ENCODE measurements at regions of chr16 and their contacts with region 1.

Region 1: GRCh38 chr16:19886073-19886941 is 1.7 kb upstream of the GPRC5B start:
- DNase-seq: peak; percentile 12
- H3K4me3 ChIP-seq: peak overlapping the region; percentile 29
- CTCF ChIP-seq: peak; percentile 100

Region 2: GRCh38 chr16:19583665-19584300 is 302.5 kb before region 1 on chr16:
- CTCF ChIA-PET with region 1: interaction called, 41 read pairs
- POLR2A ChIA-PET with region 1: no interaction called
- DNase-seq: no peak
- H3K4me3 ChIP-seq: no peak overlapping the region
- CTCF ChIP-seq: peak; percentile 82

Region 3: DNA sequence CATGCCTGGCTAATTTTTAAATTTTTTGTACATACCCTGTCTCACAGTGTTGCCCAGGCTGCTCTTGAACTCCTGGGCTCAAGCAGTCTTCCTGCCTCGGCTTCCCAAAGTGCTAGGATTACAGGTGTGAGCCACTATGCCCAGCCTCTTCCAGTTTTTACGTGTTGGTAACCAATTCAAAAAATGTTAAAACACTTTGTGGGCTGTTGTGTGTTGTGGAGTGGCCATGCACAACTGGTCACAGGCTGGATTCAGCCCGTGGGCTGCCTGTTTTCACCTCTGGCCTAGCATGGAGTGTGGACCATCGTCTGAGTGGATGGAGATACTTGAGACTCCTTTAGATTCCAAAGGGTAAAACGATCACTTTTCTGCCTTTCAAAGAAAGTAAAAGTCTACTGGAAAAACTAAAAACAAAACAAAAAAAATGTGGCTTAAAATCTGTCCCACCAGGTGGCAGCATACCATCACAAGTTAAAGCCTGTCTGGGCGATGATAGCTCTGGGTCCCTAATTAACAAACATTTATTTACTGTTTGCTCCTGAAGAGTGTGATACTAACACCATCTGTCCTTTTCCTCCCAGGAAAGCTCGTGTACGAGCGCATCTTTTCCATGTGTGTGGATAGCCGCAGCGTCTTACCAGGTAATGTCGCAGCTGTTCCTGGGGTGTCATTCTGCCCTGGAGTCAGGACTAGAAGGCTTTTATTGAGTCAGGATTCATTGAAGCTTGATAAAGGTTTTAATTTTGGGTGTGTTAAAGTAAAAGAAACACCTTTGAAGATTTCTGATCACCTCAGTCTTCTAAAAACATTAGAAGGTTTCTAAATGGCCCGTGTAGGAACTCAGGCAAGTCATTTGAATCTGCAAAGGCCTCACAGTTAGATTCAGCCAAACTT is 285.0 kb before region 1 on chr16:
- CTCF ChIA-PET with region 1: interaction called, 250 read pairs
- POLR2A ChIA-PET with region 1: no interaction called
- DNase-seq: no peak
- H3K4me3 ChIP-seq: no peak overlapping the region
- CTCF ChIP-seq: peak; percentile 37

Region 4: DNA sequence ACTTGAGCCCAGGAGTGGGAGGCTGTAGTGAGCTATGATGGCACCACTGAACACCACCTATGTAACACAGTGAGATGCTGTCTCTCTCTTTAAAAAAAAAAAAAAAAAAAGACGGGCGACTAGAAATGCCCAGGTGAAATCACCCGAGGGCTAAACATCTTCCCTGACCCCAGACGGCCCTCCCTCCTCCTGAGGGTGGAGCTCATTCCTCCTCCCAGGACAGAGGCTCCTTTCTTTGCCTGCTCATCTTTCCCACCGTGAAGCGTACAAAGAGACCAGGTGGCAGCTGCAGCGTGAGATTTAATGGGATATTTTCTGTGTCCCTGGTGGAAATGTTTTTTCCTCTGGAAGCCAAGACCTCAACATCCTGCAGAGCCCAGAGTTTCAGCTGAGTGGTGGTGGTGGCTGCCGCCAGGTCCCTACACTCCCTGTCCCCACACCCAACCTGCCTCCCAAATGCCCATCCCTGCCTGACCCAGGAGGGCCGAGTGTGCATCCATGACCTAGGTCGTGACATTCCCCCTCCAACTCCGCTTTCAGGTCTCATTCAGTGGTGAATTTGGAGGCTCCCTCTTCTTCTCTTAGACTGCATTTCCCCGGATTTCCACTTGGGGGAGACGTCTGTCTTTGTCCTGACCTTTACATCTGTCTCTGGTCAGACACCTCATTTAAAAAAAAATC is 12.8 kb after region 1 on chr16:
- CTCF ChIA-PET with region 1: interaction called, 15 read pairs
- POLR2A ChIA-PET with region 1: no interaction called
- DNase-seq: no peak
- H3K4me3 ChIP-seq: no peak overlapping the region
- CTCF ChIP-seq: peak; percentile 66

Region 5: DNA sequence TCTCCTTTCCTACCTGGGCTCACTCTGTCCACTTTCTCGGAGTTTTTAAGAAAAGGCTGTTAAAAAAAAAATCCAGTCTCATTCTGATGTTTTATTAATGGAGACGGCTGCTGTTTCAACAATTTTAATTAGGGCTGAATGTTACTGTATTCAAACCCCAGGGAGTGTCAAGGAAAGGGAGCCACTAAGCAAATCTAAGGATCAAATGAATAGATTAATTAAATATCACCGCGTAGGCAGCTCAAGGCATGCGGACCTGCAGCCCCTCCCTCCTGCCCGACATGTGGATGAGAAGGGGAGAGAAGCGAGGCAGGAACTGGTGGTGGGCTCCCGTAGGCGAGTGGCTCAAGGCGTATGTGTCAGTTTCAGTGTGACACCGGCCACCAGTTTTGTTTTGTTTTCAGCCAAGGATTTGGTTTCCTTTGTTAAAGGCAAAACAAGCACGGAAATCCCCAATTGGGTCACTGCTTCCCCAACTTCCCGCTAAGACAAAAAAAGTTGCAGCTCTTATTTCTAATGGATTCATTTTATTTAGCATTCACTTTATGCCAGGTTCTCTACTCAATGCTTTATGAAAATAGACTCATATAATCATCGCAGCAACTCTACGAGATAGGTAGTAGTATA is 330.4 kb after region 1 on chr16:
- CTCF ChIA-PET with region 1: no interaction called
- POLR2A ChIA-PET with region 1: no interaction called
- DNase-seq: no peak
- H3K4me3 ChIP-seq: no peak overlapping the region
- CTCF ChIP-seq: no peak

Measured in AG04449 (cell line).